Left cardiac atrium (tissue), 4 donors: ENCODE measurements at regions of chr14 and their contacts with region 1.

Region 1: DNA sequence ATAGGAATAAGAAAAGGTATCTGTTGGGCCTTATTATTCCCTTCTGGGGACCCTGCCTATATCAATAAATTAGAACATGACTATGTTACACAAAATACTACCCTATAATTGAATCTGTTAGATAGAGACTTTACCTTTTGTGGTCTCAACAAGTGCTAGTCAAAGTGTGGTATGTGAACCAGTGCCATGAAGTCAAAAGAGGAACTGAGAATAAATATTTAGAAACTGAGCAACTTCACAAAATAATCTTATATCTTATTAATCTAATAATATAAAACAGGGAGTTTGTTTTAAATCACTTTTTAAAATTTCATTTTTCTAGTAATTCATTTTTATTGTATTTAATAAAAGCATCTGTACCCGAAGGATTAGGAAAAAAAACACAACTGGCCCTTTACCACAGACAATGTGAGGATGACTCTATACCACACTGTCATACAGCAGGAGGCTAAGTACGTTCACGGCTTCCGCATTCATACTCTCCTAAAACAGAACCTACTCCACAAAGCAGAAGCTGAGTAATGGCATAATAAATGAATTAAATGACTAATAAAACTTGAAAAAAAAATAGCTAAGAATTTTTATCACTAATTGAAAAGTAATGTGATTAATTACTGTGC is 42.1 kb downstream of the SEC23A start:
- DNase-seq: no peak
- ATAC-seq: no peak

Region 2: DNA sequence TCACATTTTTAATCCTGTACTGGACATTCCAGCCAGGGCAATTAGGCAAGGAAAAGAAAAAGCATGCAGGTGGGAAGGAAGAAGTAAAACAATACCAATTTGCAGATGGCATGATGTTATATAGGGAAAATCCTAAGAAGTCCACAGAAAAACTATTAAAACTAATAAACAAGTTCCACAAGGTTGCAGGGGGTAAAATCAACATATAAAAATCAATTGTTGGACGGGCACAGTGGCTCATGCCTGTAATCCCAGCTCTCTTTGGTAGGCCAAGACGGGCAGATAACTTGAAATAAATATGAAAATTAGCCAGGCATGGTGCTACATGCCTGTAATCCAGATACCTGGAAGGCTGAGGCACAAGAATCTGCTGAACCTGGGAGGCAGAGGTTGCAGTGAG is 10.2 kb after region 1 on chr14:
- intact Hi-C with region 1: loop called in 1 of 2 experiments (anchors 2 kb)
- DNase-seq: no peak
- ATAC-seq: no peak

Region 3: DNA sequence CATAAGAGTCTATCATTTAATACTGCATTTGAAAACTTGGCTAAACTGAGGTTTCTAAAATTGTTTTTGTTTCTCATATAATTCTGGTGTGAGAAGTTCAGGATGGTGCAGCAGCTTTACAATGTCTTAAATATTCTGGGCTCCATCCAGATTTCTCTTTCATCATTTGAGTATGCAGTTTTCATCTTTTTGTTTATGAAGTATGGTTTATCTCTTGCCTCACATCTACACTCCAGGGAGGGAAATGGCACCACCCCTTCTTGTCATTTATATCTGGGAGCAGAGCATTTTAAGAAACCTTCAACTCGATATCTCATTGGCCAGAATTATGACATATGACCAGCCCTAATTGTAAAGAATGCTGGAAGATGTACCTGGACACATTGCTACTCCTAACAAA is 77.5 kb after region 1 on chr14:
- intact Hi-C with region 1: no loop called
- DNase-seq: no peak
- ATAC-seq: no peak